Left ventricle myocardium superior (tissue), 1 donor: ENCODE measurements at regions of chr2 and their contacts with region 1.

Region 1: GRCh38 chr2:105496271-105496670 is 97.4 kb upstream of the FHL2 start:
- DNase-seq: peak; percentile 71
- ATAC-seq: peak; percentile 77

Region 2: GRCh38 chr2:105388971-105389381 is 107.3 kb before region 1 on chr2:
- intact Hi-C with region 1: loop called (anchors 10 kb)
- DNase-seq: no peak
- ATAC-seq: no peak